ENCODE measurements at regions of chr22 and their contacts with region 1.

Region 1: GRCh38 chr22:37933711-37934376 is 19.6 kb downstream of the C22orf23 start:
- DNase-seq: peak; percentile 89
- H3K4me3 ChIP-seq: no peak overlapping the region
- H3K27ac ChIP-seq: peak overlapping the region; percentile 49 to 64
- H3K4me1 ChIP-seq: peaks cover 17% of the 10 kb centered on the region
- H3K27me3 ChIP-seq: no peaks in the 10 kb centered on the region
- CTCF ChIP-seq: peak; percentile 76 to 98 (median 96)
- POLR2A ChIP-seq: peak; percentile 22

Region 2: DNA sequence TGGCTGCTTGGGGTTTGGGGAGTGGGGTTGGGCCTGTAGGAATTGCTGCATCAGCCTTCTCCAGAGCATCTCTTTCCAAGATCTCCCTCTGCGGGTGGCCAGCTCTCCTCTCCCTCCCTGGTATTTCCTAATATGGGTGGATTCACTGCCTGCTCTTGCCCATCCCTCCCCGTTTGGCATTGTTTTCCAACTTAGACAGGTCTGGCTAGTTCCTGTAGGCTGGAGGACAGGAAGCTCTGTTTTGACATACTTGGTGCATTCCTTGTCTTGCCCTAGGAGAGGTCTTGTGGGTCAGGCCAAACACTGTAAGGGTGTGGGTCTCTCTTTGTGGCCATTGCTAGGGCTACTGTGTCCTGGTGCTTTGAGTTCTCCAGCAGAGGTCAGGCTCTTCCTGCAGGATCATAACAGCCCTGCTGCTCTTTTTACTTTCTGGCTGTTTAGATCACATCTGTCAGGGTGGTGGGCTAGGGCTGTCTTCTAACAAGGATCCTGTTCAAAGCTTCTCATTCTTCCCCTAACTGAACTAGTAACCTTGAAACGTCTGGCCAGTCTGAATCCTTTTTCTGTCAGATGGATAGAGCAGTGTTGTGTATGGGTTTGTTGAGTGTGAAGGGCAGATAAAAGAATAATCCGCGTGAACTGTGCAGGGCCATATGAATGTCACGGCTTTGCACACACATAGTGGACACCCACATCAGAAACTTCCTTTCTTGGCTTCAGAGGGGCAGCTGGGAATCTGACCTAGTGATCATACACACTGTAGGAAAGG is 46.0 kb before region 1 on chr22:
- intact Hi-C with region 1: loop called (anchors 1 kb)
- DNase-seq: peak; percentile 90
- H3K4me3 ChIP-seq: no peak overlapping the region
- H3K27ac ChIP-seq: peak overlapping the region; percentile 75 to 80
- H3K4me1 ChIP-seq: peaks cover 8% of the 10 kb centered on the region
- H3K27me3 ChIP-seq: no peaks in the 10 kb centered on the region
- CTCF ChIP-seq: peak; percentile 10 to 72 (median 46)
- POLR2A ChIP-seq: no peak

Region 3: GRCh38 chr22:37905534-37906363 is 28.1 kb before region 1 on chr22 and contains the start of gene MICALL1:
- intact Hi-C with region 1: loop called (anchors 2 kb)
- DNase-seq: peak; percentile 75
- H3K4me3 ChIP-seq: peak within 1 kb of the TSS; percentile 77 to 83
- H3K27ac ChIP-seq: peak within 1 kb of the TSS; percentile 84 to 90
- H3K4me1 ChIP-seq: no peaks in the 10 kb centered on the region
- H3K27me3 ChIP-seq: no peaks in the 10 kb centered on the region
- CTCF ChIP-seq: peak in 2 of 4 experiments; percentile 38 to 63
- POLR2A ChIP-seq: peak; percentile 49
- total RNA-seq, gene MICALL1: 42.8 to 62.8 TPM